CD8-positive, alpha-beta T cell (primary cell): ENCODE measurements at regions of chr4 and their contacts with region 1.

Region 1: DNA sequence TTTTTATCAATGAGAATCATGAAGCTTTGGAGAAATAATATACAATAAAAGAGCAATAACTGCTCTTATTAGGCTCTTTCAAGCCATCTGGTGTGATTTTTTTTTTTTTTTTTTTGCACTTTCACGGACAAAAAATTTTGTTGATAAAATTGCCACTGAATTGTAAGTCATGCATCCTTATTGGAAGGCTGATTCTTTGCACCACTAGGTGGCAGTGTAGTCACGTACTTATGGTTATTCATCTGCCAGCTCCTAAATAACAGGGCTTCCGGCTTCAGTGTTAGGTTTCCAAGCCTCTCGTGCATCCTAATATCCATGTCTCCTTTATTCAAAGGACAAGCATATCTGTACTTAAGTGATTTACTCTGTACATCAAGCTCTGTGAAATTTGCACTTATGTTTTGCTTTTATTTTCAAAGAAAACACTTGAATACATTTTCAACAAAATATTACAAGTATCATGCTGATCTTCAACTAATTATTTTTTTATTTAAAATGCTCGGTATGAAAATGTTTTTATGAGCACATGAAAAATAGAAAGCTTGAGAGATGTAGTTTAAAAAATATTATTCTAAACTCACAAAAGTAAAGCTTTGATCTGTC is 1578.3 kb upstream of the TENM3 start:
- DNase-seq: peak in 6 of 9 experiments; percentile 11 to 63 (median 47)
- ATAC-seq: no peak
- H3K4me3 ChIP-seq: no peak overlapping the region
- H3K4me3 Mint-ChIP-seq: no peak overlapping the region
- H3K27ac ChIP-seq: no peak overlapping the region
- H3K27ac Mint-ChIP-seq: no peak overlapping the region
- H3K4me1 ChIP-seq: no peaks in the 10 kb centered on the region
- H3K4me1 Mint-ChIP-seq: no peaks in the 10 kb centered on the region
- H3K27me3 ChIP-seq: no peaks in the 10 kb centered on the region
- H3K27me3 Mint-ChIP-seq: no peaks in the 10 kb centered on the region
- CTCF ChIP-seq: peak; percentile 74

Region 2: DNA sequence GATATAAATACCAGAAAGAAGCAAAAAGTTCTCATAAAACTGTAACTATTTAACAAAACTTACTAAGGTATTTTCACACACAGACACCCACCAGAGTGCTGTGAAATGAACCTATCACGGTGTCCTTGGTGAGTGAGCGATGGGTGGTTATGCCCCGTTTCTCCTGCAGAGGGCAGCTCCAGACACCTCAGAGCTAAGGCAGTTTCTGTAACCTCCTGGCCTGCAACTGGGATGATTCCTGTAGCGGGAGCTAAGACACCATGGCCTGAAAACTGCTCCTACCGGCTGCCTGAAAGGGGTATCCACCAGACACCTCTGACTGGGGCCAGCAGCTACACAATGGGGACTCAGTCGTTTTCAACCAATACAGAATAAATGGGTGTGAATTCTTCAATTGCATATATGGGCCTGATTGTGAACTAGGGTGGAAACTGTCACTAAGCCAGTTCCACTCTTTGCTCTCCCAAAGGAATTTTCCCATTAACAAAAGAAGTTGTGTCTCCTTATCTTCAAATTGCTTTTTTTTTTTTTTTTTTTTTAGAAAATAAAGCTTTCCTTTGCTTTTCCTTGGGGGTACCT is 797.5 kb before region 1 on chr4:
- CTCF ChIA-PET with region 1: interaction called, 4 read pairs
- POLR2A ChIA-PET with region 1: no interaction called
- intact Hi-C with region 1: loop called in 1 of 2 experiments (anchors 5 kb)
- DNase-seq: peak in 4 of 9 experiments; percentile 5 to 26 (median 8)
- ATAC-seq: peak; percentile 42
- H3K4me3 ChIP-seq: no peak overlapping the region
- H3K4me3 Mint-ChIP-seq: no peak overlapping the region
- H3K27ac ChIP-seq: no peak overlapping the region
- H3K27ac Mint-ChIP-seq: no peak overlapping the region
- H3K4me1 ChIP-seq: no peaks in the 10 kb centered on the region
- H3K4me1 Mint-ChIP-seq: no peaks in the 10 kb centered on the region
- H3K27me3 ChIP-seq: no peaks in the 10 kb centered on the region
- H3K27me3 Mint-ChIP-seq: no peaks in the 10 kb centered on the region
- CTCF ChIP-seq: no peak

Region 3: DNA sequence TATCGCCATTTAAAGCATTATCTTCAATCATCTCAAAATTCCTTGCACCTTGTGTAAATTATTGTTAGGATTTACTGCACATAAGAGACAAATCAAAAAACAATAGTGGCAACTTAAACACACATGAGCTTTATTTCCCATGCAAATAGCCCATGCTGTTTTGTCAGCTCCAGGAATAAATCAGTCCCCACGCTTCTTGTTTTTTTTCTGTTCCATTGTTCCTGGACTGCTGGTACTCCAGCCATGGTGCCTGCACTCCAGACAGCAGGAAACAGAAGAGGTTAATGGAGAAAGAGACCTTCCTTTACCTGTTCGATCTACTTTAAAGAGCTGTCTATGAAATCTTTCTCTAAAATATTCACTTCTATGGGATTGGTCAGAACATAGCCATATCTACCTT is 62.6 kb after region 1 on chr4:
- CTCF ChIA-PET with region 1: no interaction called
- POLR2A ChIA-PET with region 1: no interaction called
- intact Hi-C with region 1: no loop called
- DNase-seq: no peak
- ATAC-seq: no peak
- H3K4me3 ChIP-seq: no peak overlapping the region
- H3K4me3 Mint-ChIP-seq: no peak overlapping the region
- H3K27ac ChIP-seq: no peak overlapping the region
- H3K27ac Mint-ChIP-seq: no peak overlapping the region
- H3K4me1 ChIP-seq: no peaks in the 10 kb centered on the region
- H3K4me1 Mint-ChIP-seq: no peaks in the 10 kb centered on the region
- H3K27me3 ChIP-seq: no peaks in the 10 kb centered on the region
- H3K27me3 Mint-ChIP-seq: no peaks in the 10 kb centered on the region
- CTCF ChIP-seq: no peak